Posterior vena cava (tissue), 2 donors: ENCODE measurements at regions of chr4 and their contacts with region 1.

Region 1: DNA sequence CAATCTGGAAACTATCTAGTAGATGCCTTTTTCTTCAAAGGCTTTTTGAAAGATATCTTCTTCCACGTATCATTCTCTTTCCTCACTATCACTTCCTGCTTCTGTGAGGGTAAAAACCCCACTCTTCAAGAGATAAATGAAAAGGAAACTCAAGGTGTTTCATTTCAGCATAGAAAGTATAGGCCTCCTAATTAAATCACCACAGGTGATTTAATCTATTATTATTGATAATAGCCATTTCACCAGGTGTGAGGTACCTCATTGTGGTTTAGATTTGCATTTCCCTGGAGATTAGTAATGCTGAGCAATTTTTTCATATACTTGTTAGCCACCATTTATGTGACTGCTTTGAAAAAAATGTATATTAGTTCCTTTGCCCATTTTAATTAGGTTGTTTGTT is 92.0 kb upstream of the EMCN start:
- DNase-seq: no peak

Region 2: GRCh38 chr4:100569196-100569595 is 40.6 kb before region 1 on chr4:
- intact Hi-C with region 1: loop called in 1 of 2 experiments (anchors 2 kb)
- DNase-seq: no peak

Region 3: GRCh38 chr4:100593953-100594352 is 15.9 kb before region 1 on chr4:
- intact Hi-C with region 1: loop called in 1 of 2 experiments (anchors 1 kb)
- DNase-seq: no peak